ENCODE measurements at regions of chr5 and their contacts with region 1.

Region 1: DNA sequence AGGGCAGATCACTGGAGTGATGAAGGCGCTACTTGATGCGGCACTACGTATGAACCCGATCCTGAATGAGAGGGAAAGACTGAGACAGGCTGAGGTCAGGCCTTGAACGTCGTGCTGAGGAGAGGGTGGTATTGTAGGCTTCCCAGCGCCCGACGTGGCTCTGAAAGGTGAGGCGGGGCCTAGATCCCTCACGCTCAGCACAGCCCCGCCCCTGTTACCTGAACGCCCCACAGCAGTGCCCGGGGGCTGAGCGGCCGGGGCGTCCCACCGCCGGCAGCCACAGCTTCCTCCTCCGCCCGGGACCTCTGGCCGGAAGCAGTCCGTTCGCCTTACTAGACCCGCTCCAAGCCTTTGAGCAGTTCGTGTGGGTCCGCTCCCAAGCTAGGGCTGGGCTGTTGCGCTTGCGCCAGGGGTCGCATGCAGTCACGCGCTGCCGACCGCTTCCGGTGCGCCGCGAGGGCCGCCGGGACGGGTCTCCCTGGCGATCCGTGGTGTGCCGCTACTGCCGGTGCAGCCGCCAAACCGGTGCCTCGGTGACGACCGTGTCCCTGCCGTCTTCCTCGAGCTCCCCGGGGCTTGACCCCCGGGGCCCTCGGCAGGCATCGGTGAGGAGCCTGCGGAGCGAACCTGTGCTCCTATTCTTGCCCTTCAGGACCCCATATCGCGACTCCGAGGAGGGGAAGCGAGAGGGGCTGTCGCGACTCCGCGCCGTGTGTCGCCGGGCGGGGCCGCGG is at the starts of genes HMGXB3 and TIGD6:
- DNase-seq: peak; percentile 84
- H3K4me3 Mint-ChIP-seq: peak within 1 kb of the TSS; percentile 96
- H3K27ac Mint-ChIP-seq: peak within 1 kb of the TSS; percentile 95
- H3K4me1 Mint-ChIP-seq: peaks cover 36% of the 10 kb centered on the region
- H3K27me3 Mint-ChIP-seq: no peaks in the 10 kb centered on the region
- total RNA-seq, gene HMGXB3: 39.6 and 42.2 TPM in 2 replicates
- total RNA-seq, gene TIGD6: 2.4 and 2.6 TPM in 2 replicates

Region 2: GRCh38 chr5:149551200-149552037 is 449.0 kb before region 1 on chr5 and contains the start of gene CSNK1A1:
- intact Hi-C with region 1: loop called (anchors 1 kb)
- DNase-seq: peak; percentile 99
- H3K4me3 Mint-ChIP-seq: peak within 1 kb of the TSS; percentile 96
- H3K27ac Mint-ChIP-seq: peak within 1 kb of the TSS; percentile 100
- H3K4me1 Mint-ChIP-seq: peaks cover 20% of the 10 kb centered on the region
- H3K27me3 Mint-ChIP-seq: no peaks in the 10 kb centered on the region
- total RNA-seq, gene CSNK1A1: 176 and 194 TPM in 2 replicates

Region 3: DNA sequence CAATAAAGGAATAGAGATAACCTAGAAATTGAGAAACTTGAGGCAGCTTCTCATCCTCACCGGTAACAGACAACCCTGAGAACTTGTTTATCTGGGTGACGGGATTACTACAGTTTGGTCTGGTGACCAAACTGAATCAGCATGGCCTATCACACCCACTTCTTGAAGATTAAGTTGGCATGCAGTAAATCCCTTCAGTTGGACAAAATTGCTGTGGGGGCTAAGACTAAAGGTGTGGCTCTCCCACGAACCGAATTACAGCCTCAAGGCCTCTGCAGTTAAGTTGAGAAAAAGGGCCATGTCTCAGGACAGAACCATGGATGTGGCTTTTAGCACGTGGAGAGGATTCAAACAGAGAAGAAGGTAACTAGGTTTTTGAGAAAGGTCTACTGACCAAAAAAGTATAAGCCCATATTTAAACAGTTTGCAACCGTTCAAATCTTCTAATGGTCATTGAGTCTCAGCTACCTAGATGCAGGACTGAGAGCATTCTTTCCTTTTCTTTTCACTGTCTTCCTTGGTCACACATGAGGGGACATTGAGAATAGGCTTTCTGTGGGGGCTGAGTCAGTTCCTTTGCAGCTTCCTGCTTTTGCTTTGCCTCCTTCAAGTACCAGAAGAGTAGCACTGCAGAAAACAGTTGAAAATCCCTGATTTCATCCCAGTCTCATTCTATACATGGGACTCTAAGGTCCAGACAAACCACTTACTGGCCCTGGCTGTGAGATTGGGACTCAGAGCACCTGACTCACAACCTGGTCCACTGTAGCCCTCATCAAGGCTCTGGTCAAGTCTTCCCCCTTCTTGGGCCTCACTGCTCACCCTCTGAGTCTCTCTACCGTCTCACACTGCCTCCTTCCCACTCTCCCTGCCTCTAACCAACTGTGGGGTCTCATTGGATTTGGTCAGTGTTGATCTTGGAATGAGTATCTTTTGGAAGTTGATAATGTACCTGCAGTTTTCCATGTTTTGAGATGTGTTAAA is 86.7 kb before region 1 on chr5:
- intact Hi-C with region 1: no loop called
- DNase-seq: no peak
- H3K4me3 Mint-ChIP-seq: no peak overlapping the region
- H3K27ac Mint-ChIP-seq: no peak overlapping the region
- H3K4me1 Mint-ChIP-seq: peaks cover 3% of the 10 kb centered on the region
- H3K27me3 Mint-ChIP-seq: peaks cover 20% of the 10 kb centered on the region

Region 4: DNA sequence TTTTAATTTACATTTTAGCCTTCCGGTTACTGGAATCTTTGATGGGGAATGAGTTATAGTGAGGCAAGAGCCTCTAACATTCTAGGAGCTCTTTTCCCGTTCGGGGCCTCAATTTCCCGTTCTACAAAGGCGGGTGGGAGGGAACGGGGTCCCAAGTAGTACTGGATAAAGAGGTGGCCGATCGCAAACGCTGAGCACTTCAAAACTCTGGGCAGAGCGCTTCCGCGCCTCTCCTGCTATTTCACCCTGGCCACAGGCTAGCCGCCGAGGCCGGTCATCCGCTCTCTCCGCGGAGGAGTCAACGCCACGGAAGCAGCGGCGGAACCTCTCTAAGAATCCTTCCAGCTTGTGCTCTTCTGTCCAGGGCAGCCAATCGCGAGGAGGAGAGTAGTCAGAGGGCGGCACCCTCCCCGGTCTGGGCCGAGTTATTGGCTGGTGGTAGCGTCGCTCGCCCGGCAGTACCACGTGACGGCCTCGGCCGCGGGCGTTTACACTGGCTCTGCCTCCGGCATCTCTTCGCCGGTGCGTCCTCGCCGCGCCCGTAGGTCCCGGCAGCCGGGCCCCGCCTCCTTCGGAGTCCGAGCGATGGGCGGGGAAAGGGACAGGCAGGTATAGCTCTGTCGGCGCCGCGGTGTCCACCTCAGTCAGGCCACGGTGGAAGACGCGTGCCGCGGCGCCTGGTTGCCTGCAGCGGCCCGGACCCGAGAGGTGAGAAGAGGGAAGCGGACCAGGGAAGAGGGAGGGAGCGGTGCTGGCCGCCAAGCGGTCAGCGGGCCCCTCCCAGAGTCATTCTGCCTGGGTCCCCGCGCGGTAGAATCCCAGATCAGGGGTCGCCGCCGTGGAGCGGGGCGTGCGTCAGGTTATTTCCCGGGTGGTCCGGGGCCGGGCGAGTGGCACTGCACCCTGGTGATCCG is 39.9 kb before region 1 on chr5 and contains the start of gene SLC26A2:
- intact Hi-C with region 1: loop called (anchors 1 kb)
- DNase-seq: peak; percentile 94
- H3K4me3 Mint-ChIP-seq: peak within 1 kb of the TSS; percentile 89
- H3K27ac Mint-ChIP-seq: peak within 1 kb of the TSS; percentile 99
- H3K4me1 Mint-ChIP-seq: peaks cover 33% of the 10 kb centered on the region
- H3K27me3 Mint-ChIP-seq: no peaks in the 10 kb centered on the region
- total RNA-seq, gene SLC26A2: 7.7 and 8.0 TPM in 2 replicates

Region 5: DNA sequence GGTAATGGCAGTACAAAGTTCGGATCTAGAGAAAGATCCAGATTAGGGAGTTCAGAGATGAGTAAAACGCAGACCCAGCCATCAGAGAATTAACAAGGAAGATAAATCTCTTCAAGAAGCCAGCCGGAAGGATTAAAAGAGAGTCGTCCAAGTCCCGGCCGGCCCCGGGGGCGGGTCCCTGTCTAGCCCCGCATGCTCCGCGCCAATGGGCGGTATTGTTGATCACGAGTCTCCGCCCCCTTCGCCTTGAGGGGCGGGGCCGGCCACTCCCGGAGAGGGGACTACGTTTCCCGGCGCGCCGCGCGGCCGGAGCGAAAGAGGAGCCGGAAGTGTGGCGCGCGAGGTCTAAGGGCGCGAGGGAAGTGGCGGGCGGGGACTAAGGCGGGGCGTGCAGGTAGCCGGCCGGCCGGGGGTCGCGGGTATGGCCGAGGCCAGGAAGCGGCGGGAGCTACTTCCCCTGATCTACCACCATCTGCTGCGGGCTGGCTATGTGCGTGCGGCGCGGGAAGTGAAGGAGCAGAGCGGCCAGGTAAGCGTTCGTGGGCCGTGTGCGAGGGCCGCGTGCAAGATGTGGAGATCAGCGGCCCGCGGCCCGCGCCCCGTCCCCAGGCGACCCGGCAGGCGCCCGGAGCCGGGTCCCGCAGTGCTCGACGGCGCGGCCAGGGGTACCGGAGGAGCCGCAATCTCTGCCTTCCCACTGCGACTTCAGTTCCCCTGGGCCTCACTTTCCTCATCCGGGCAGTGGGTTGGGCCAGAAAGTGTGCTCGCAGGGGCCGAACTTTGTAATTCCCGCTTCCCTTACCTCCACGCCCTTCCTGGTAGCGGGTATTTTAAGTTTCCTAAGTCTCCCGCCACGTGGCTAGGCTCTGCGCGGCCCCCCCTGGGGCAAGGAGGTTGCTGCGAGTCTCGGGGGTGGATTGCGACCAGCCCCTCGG is 357.2 kb after region 1 on chr5 and contains the start of gene TCOF1:
- intact Hi-C with region 1: loop called (anchors 1 kb)
- DNase-seq: peak; percentile 96
- H3K4me3 Mint-ChIP-seq: peak within 1 kb of the TSS; percentile 87
- H3K27ac Mint-ChIP-seq: peak within 1 kb of the TSS; percentile 85
- H3K4me1 Mint-ChIP-seq: peaks cover 32% of the 10 kb centered on the region
- H3K27me3 Mint-ChIP-seq: peaks cover 4% of the 10 kb centered on the region
- total RNA-seq, gene TCOF1: 95.8 and 98.2 TPM in 2 replicates

Region 6: GRCh38 chr5:150449517-150450339 is 449.3 kb after region 1 on chr5 and contains the start of gene RPS14:
- intact Hi-C with region 1: loop called (anchors 2 kb)
- DNase-seq: peak; percentile 91
- H3K4me3 Mint-ChIP-seq: peak within 1 kb of the TSS; percentile 99
- H3K27ac Mint-ChIP-seq: peak within 1 kb of the TSS; percentile 100
- H3K4me1 Mint-ChIP-seq: peaks cover 23% of the 10 kb centered on the region
- H3K27me3 Mint-ChIP-seq: no peaks in the 10 kb centered on the region
- total RNA-seq, gene RPS14: 2,552 and 2,593 TPM in 2 replicates